ENCODE measurements at regions of chr15 and their contacts with region 1.

Region 1: DNA sequence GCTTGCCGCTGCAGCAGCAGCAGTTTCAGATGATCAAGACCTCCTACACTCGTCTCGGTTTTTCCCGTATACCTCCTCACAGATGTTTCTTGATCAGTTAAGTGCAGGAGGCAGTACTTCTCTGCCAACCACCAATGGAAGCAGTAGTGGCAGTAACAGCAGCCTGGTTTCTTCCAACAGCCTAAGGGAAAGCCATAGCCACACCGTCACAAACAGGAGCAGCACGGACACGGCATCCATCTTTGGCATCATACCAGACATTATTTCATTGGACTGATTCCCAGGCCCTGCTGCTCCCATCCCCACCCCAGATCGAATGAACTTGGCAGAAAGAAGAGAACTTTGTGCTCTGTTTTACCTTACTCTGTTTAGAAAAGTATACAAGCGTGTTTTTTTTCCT is 17.6 kb downstream of the CALML4 start:
- DNase-seq: peak; percentile 49
- H3K4me3 ChIP-seq: no peak overlapping the region
- H3K27ac ChIP-seq: peak overlapping the region; percentile 97
- H3K4me1 ChIP-seq: peaks cover 70% of the 10 kb centered on the region
- CTCF ChIP-seq: no peak

Region 2: DNA sequence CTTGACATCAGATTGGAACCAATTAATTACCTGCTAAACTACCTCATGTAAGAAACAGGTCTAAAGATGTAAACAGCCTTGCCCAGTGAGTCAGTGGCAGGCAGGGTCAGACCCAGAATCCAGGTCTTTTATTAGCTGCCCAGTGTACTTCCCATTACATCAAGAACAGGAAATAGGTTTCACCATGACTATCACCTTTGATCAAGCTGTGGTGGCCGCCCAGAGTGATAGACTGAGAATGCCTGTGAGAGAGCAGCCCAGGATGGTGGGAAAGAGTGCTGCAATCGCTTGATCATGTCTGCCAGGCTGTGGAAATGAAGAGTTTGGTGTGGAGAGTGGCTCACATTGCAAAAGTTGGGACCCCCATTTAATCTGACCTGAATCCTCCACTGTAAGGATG is 194.7 kb before region 1 on chr15:
- CTCF ChIA-PET with region 1: no interaction called
- POLR2A ChIA-PET with region 1: no interaction called
- intact Hi-C with region 1: no loop called
- DNase-seq: no peak
- H3K4me3 ChIP-seq: no peak overlapping the region
- H3K27ac ChIP-seq: no peak overlapping the region
- H3K4me1 ChIP-seq: peaks cover 8% of the 10 kb centered on the region
- CTCF ChIP-seq: no peak

Region 3: DNA sequence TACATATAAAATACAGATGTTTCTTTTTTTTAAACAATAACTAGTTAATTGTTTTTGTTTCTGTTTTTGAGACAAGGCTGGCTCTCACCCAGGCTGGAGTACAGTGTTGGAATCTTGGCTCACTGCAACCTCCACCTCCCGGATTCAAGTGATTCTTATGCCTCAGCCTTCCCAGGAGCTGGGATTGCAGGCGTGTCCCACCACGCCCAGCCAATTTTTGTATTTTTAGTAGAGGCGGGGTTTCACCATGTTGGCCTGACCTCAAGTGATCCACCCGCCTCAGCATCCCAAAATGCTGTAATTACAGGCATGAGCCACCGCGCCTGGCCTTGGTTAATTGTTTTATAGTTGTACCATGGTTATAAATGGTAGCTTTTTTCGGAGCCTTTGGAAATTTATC is 61.2 kb before region 1 on chr15:
- CTCF ChIA-PET with region 1: no interaction called
- POLR2A ChIA-PET with region 1: no interaction called
- intact Hi-C with region 1: no loop called
- DNase-seq: no peak
- H3K4me3 ChIP-seq: no peak overlapping the region
- H3K27ac ChIP-seq: no peak overlapping the region
- H3K4me1 ChIP-seq: no peaks in the 10 kb centered on the region
- CTCF ChIP-seq: no peak

Region 4: DNA sequence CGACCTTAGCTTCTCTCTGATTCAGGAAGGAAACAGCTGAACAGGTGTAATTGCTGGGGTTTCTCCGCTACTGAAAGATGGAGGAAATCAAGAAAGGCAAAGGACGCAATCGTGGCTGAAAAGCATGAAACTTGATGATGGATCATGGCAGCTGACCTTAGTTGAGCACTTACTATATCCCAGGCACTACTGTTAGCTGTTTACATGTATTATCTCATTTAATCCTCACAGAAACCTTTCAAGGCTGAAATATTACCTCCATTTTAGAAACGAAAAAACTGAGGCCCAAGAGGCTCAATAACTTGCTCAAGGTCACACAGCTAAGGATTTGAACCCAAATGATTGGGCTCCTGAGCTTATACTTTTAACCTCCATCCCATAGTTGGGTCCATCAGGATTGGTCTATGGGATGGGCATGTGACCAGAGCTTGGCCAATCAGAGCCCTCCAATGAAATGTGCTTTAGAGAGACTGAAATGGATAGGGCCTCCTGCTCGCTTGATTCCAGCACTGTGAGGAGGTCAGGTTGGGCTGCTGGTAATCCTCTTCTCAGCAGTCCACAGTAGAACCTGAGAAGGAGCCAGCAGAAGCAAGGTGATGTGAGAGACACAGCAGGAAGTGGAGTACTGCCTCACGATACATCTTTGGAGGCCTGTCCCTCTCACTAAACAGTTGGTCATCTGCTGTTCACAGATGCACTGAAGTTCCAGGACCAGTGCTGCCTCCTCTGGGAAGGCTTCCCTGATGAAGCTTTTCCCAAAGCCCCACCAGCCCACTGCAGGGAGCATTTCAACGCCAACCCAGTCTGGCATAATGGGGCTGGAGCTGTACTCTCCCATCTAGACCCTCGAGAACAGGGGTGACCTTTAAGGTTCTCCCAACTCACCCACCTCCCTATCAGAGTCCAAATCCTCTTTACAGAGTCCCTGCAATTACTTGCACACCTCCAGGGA is 31.6 kb after region 1 on chr15:
- CTCF ChIA-PET with region 1: no interaction called
- POLR2A ChIA-PET with region 1: no interaction called
- intact Hi-C with region 1: no loop called
- DNase-seq: no peak
- H3K4me3 ChIP-seq: no peak overlapping the region
- H3K27ac ChIP-seq: no peak overlapping the region
- H3K4me1 ChIP-seq: peaks cover 2% of the 10 kb centered on the region
- CTCF ChIP-seq: no peak

Region 5: DNA sequence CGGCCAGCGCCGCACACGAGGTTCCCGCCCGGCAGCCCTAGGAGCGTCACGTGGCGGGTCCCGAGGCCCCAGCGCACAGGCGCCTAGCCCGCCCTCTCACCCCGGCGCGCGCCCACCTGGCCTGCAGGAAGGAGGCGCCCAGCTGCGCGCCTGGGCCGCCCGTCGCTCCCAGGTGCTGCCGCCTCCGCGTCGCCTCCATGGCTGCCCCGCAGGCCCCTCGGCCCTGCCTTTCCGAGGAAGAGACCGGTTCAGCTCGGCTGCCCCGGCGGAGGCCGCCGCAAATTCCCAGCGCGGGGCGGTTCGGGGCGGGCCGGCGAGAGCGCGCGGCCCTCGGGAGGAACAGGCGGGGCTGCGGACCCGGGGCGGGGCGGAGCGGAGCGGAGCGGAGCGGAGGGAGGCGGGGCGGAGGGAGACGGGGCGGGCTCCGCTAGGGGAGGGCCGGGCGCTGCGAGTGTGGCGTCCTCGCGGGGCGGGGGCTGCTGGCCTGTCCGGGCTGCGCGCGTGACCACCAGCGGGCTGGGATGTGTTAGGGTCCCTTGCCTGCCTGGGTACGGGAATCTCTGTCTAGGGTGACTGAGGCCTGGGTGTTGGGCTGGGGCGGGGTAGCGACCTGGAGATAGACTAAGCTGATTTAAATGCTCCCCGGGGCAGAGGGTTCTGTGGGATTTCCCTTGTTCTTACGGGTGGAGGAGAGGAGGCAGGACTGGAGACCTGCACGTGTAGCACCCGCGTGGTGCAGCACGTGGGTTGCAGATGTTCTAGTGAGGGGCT is 42.0 kb after region 1 on chr15 and contains the start of gene CLN6:
- CTCF ChIA-PET with region 1: no interaction called
- POLR2A ChIA-PET with region 1: interaction called, 5 read pairs
- intact Hi-C with region 1: loop called (anchors 1 kb)
- DNase-seq: peak; percentile 92
- H3K4me3 ChIP-seq: peak within 1 kb of the TSS; percentile 80
- H3K27ac ChIP-seq: peak within 1 kb of the TSS; percentile 80
- H3K4me1 ChIP-seq: peaks cover 49% of the 10 kb centered on the region
- CTCF ChIP-seq: no peak; the same call in 1 of the 2 replicates
- total RNA-seq, gene CLN6: 50.3 and 60.2 TPM in 2 replicates

Measured in OCI-LY7 (cell line).